ENCODE measurements at regions of chr9 and their contacts with region 1.

Region 1: DNA sequence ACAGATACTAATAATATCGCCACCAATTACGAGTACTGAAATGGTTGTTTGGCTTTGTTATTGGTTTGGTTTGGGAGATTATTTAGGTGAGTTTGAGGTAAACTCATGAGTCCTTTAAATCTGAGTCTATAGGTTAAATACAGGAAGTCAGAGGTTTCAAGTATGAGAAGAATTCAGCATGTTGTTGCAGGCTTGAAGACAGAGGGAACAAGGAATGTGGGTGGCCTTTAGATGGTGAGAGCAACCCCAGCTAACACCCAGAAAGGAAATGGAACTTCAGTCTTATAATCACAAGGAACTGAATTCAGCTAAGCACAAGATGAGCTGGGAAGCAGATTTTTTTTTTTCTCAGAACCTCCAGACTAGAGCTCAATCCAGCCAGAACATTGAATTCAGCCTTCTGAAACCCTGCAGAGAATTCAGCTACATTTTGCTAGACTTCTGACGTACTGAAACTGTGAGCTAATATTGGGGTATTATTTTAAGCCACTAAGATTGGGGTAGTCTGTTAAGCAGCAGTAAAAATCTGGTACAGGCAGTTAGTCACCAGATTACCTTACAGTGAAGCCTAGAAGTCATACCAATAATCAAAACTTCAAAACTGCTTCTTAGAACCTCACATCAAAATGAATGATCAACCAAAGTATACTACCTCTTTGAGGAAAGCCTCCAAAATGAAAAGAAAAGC is 216.0 kb upstream of the PUM3 start:
- DNase-seq: no peak
- H3K4me3 ChIP-seq: no peak overlapping the region
- H3K27ac ChIP-seq: no peak overlapping the region
- H3K4me1 ChIP-seq: no peaks in the 10 kb centered on the region
- H3K27me3 ChIP-seq: no peaks in the 10 kb centered on the region
- CTCF ChIP-seq: no peak
- EP300 ChIP-seq: no peak
- POLR2A ChIP-seq: no peak

Region 2: GRCh38 chr9:3118080-3118479 is 58.2 kb after region 1 on chr9:
- intact Hi-C with region 1: loop called in 1 of 4 experiments (anchors 10 kb)
- DNase-seq: no peak
- H3K4me3 ChIP-seq: no peak overlapping the region
- H3K27ac ChIP-seq: no peak overlapping the region
- H3K4me1 ChIP-seq: no peaks in the 10 kb centered on the region
- H3K27me3 ChIP-seq: no peaks in the 10 kb centered on the region
- CTCF ChIP-seq: no peak
- EP300 ChIP-seq: no peak
- POLR2A ChIP-seq: no peak

Measured in ovary (tissue), 10 donors.